Activated CD4-positive, alpha-beta T cell treated with anti-CD3 and anti-CD28 coated beads for 36 hours (primary cell): ENCODE measurements at regions of chr2 and their contacts with region 1.

Region 1: DNA sequence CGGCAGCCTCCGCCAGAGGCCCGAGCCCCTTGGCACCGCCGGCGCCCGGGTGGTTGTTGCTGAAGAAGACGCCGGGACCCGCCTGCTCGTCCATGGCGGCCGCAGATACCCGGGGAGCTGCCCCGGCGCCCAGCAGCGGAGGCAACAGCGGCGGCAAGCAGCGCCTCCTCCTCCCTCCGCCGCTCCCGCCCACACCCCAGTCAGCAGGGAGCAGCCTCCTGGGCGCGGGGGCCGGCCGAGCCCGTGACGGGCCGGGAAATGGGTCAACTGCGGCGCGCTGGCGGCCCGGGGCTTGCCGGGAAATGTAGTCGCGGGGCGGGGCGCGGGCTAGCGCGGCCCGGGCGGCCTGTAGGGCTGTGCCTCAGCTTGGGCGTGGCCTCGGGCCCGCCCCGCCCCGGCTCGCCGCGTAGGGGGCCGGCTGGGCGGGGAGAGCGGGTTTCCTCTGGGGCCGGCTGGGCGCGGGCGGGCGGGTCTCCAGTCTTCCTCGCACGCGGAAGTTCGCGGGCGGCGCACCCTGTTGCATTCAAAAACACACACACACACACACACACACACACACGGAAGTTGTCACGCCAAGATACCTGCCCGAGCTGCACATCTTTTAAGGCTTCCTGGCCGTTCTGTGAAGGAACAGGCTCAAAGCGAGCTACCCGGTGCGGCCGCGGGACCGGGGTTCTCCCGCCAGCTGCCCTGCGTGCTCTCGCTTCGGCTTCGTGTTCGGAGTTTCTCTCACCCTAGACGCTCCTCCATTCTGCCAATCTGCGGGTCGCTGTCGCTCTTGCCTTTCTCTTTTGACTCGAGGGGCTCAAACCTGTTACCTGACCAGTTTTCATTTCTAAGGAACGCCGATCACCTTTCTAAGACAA is at the start of gene STRN:
- DNase-seq: peak; percentile 99
- ATAC-seq: peak; percentile 95
- H3K4me3 Mint-ChIP-seq: peak within 1 kb of the TSS; percentile 100
- H3K27ac Mint-ChIP-seq: peak within 1 kb of the TSS; percentile 97
- H3K4me1 Mint-ChIP-seq: peaks cover 41% of the 10 kb centered on the region
- H3K27me3 Mint-ChIP-seq: no peaks in the 10 kb centered on the region
- total RNA-seq, gene STRN: 27.7 to 32.0 TPM

Region 2: DNA sequence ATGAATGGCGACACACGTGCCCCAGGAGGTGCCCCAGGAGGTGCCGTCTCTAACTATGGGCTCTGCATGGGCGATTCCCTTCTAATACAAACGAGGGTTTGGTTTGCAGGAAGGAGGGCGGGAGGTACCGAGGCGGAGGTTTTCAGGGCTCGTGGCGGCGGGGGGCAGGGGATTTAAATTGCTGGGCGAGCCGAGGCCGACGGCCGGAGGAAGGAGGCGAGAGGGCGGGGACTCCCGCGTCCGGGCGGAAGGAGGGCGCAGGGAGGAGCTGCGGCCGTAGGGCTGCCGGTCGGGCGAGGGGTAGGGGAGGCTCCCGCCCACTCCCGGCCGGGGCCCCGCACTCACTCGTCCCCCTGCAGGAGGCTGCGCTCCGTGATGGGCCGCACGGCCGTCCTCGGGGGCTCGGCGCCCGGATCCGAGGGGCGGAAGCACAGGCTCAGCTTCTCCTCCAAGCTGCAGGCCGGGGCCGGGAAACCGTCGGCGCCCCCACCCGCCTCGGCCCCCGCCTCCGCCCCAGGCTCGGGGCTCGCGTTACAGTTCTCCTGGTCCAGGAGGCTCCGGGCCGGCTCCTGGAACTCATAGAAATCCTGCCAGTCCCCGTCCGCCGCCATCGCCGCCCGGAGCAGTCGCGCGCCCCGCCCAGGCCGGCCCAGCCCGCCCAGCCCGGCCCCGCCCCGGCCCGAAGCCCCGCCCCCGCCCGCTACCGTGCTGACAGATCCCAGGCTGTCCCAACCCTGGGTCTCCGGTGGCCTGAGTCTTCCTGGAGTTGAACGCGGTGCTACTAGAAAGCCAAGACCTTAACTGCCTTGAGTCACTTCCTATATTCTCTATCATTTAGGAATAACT is 368.8 kb before region 1 on chr2 and contains the start of gene FEZ2:
- CTCF ChIA-PET with region 1: no interaction called
- POLR2A ChIA-PET with region 1: no interaction called
- intact Hi-C with region 1: loop called (anchors 2 kb)
- DNase-seq: peak; percentile 83
- ATAC-seq: peak; percentile 94
- H3K4me3 Mint-ChIP-seq: peak within 1 kb of the TSS; percentile 87
- H3K27ac Mint-ChIP-seq: peak within 1 kb of the TSS; percentile 92
- H3K4me1 Mint-ChIP-seq: peaks cover 29% of the 10 kb centered on the region
- H3K27me3 Mint-ChIP-seq: no peaks in the 10 kb centered on the region
- total RNA-seq, gene FEZ2: 9.1 to 12.2 TPM

Region 3: GRCh38 chr2:36889795-36890194 is 76.8 kb before region 1 on chr2:
- CTCF ChIA-PET with region 1: no interaction called
- POLR2A ChIA-PET with region 1: no interaction called
- intact Hi-C with region 1: loop called in 1 of 2 experiments (anchors 1 kb)
- DNase-seq: peak; percentile 25
- ATAC-seq: peak; percentile 99
- H3K4me3 Mint-ChIP-seq: no peak overlapping the region
- H3K27ac Mint-ChIP-seq: peak overlapping the region; percentile 67
- H3K4me1 Mint-ChIP-seq: peaks cover 8% of the 10 kb centered on the region
- H3K27me3 Mint-ChIP-seq: no peaks in the 10 kb centered on the region

Region 4: GRCh38 chr2:37020212-37020886 is 53.7 kb after region 1 on chr2:
- CTCF ChIA-PET with region 1: no interaction called
- POLR2A ChIA-PET with region 1: no interaction called
- intact Hi-C with region 1: no loop called
- DNase-seq: no peak
- ATAC-seq: no peak
- H3K4me3 Mint-ChIP-seq: no peak overlapping the region
- H3K27ac Mint-ChIP-seq: no peak overlapping the region
- H3K4me1 Mint-ChIP-seq: no peaks in the 10 kb centered on the region
- H3K27me3 Mint-ChIP-seq: no peaks in the 10 kb centered on the region

Region 5: DNA sequence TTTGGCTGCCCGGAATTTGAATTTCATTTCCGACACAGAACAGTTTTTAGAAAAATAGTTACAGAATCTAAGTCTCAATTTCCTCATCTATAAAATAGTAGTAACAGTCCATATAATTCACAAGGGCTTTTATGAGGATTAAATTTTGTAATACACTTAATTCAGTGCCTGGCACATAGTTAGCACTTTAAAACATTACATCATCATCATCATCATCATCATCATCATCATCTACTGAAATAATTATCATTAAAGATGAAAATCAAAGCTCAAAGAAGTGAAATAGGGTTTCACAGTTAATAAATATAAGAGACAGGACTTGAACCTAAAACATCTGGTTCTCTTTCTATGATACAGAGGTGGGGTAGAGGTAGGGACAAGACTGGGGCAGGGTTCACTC is 104.3 kb after region 1 on chr2:
- CTCF ChIA-PET with region 1: no interaction called
- POLR2A ChIA-PET with region 1: no interaction called
- intact Hi-C with region 1: no loop called
- DNase-seq: no peak
- ATAC-seq: no peak
- H3K4me3 Mint-ChIP-seq: no peak overlapping the region
- H3K27ac Mint-ChIP-seq: no peak overlapping the region
- H3K4me1 Mint-ChIP-seq: peaks cover 15% of the 10 kb centered on the region
- H3K27me3 Mint-ChIP-seq: no peaks in the 10 kb centered on the region

Region 6: GRCh38 chr2:37083873-37084794 is 117.5 kb after region 1 on chr2 and contains the starts of genes GPATCH11 and HEATR5B:
- CTCF ChIA-PET with region 1: no interaction called
- POLR2A ChIA-PET with region 1: no interaction called
- intact Hi-C with region 1: loop called (anchors 1 to 2 kb)
- DNase-seq: peak; percentile 94
- ATAC-seq: peak; percentile 89
- H3K4me3 Mint-ChIP-seq: no peak within 1 kb of the TSS
- H3K27ac Mint-ChIP-seq: no peak within 1 kb of the TSS
- H3K4me1 Mint-ChIP-seq: peaks cover 44% of the 10 kb centered on the region
- H3K27me3 Mint-ChIP-seq: no peaks in the 10 kb centered on the region
- total RNA-seq, gene GPATCH11: 9.6 to 10.0 TPM
- total RNA-seq, gene HEATR5B: 15.2 TPM

Region 7: DNA sequence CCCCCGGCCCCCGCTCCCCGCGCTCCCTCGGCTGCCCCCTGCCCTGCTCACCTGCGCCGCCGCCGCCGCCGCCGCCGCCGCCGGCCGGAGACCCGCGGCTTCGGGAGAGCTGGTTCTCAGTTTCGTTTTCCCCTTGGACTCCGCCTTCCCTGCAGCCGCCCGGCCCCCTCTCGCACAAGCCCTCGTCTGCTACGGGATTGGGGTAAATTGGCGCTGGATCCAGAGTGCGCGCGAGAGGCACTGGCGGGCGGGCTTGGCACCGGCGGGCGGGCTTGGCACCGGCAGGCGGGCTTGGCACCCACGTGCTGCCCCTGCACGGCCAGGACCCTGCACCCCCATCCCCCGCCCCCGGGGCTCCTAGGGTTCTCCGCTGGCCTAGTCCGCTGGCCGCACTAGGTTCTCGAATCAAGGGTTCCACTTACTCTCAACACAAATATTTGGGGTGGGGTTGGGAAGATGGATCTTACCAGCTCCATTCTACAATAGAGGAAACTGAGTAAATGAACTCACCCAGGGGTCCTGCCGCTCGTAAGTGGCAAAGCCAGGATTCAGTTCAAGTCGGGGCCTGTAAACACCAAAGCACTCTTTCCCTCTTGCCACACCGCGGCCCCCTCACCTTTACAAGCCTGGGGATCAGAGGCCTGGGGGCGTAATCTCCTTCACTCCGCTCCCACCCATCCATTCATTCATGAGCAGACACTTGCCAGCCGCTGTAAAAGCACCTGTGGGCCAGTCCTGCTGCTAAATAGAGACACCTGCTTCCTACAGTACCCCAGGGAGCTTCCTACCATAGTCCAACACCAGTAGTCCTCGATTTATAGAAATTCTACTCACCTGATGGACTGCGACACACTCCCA is 190.5 kb after region 1 on chr2 and contains the start of gene EIF2AK2:
- CTCF ChIA-PET with region 1: no interaction called
- POLR2A ChIA-PET with region 1: no interaction called
- intact Hi-C with region 1: loop called in 1 of 2 experiments (anchors 2 kb)
- DNase-seq: peak; percentile 89
- ATAC-seq: peak; percentile 93
- H3K4me3 Mint-ChIP-seq: peak within 1 kb of the TSS; percentile 85
- H3K27ac Mint-ChIP-seq: peak within 1 kb of the TSS; percentile 89
- H3K4me1 Mint-ChIP-seq: peaks cover 40% of the 10 kb centered on the region
- H3K27me3 Mint-ChIP-seq: no peaks in the 10 kb centered on the region
- total RNA-seq, gene EIF2AK2: 66.4 to 70.6 TPM

Region 8: GRCh38 chr2:37196320-37197195 is 230.0 kb after region 1 on chr2 and contains the start of gene CEBPZOS:
- CTCF ChIA-PET with region 1: no interaction called
- POLR2A ChIA-PET with region 1: no interaction called
- intact Hi-C with region 1: loop called in 1 of 2 experiments (anchors 1 kb)
- DNase-seq: peak; percentile 93
- ATAC-seq: peak; percentile 84
- H3K4me3 Mint-ChIP-seq: peak within 1 kb of the TSS; percentile 86
- H3K27ac Mint-ChIP-seq: peak within 1 kb of the TSS; percentile 95
- H3K4me1 Mint-ChIP-seq: peaks cover 33% of the 10 kb centered on the region
- H3K27me3 Mint-ChIP-seq: no peaks in the 10 kb centered on the region
- total RNA-seq, gene CEBPZOS: 46.6 to 49.8 TPM

Region 9: DNA sequence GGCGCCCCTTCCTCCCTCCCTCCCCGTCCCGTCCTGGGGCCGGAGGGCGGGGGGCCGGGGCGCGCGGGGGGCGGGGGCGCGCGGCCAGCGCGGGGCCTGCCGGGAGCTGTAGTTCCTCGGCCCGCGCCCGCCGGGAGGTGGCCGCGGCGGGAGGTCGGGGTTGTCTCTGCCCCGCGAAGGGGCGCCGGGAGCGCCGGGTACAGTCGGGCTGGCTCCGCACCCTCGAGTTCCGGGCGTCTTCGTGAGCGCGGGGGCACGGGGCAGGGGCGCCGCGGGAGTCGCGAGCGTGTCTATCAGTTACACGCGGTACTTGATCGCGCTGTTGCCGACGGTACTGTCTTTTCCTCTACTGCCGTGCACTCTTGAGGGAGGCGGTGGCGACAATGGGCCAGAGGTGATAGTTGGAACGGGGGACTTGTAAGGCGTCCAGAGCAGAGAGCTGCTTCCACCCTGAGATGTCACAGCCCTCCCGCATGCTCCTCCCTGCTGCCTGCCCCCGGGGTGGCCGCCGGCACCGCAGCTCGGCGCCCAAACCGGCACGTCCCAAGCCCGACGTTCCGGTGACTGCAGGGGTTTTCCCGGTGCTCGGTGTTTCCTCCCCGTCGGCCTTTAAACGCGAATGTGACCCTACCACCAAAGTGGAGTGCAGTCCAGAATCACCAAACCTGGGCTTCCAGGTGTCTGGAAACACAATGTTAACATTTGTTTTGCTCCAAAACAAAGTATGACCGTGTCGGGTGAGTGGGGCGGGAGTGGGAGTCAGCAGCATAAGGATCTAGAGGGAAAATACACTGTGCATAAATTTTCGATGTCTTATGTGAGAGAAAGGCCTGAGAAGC is 358.4 kb after region 1 on chr2 and contains the start of gene PRKD3:
- CTCF ChIA-PET with region 1: no interaction called
- POLR2A ChIA-PET with region 1: no interaction called
- intact Hi-C with region 1: loop called in 1 of 2 experiments (anchors 2 kb)
- DNase-seq: peak; percentile 66
- ATAC-seq: peak; percentile 76
- H3K4me3 Mint-ChIP-seq: peak within 1 kb of the TSS; percentile 91
- H3K27ac Mint-ChIP-seq: peak within 1 kb of the TSS; percentile 92
- H3K4me1 Mint-ChIP-seq: peaks cover 27% of the 10 kb centered on the region
- H3K27me3 Mint-ChIP-seq: peaks cover 17% of the 10 kb centered on the region
- total RNA-seq, gene PRKD3: 17.4 to 22.8 TPM